Psoas muscle (tissue), 8 donors: ENCODE measurements at regions of chr3 and their contacts with region 1.

Region 1: DNA sequence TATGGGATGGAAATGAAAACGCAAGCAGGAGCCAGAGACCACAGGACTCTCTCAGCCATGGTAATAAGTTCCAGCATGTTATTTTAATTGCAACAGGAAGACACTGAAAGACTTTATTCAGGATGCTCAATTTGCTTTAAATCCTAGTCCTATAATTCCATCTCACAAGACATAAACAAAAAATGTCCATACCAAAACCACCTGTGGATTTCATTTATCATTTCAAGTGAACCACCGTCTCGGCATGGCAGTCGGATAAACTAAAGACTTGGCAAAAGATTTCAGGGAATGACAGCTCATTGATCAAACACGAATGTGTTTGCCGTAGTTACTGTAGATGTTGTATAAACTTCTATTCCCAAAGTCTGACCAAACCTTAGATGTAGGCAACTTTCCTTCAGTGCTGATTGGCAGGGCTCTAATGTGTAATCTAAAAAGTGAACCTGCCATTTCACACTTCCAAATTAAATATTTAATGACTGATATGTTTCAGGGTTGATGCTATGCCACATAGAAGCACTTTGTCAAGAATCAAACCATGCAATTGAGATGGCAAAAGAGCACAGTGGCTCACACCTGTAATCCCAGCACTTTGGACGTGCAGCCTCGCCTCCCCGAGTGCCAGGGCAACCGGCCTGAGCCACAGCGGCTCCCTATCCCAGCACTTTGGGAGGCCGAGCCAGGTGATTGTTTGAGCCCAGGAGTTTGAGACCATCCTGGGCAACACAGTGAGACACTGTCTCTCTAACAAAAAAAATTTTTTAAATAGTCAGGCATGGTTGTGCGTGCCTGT is 331.7 kb downstream of the MAGI1 start:
- DNase-seq: no peak
- ATAC-seq: no peak
- H3K4me3 ChIP-seq: no peak overlapping the region
- H3K27ac ChIP-seq: no peak overlapping the region
- H3K4me1 ChIP-seq: no peaks in the 10 kb centered on the region
- H3K27me3 ChIP-seq: no peaks in the 10 kb centered on the region
- CTCF ChIP-seq: no peak

Region 2: DNA sequence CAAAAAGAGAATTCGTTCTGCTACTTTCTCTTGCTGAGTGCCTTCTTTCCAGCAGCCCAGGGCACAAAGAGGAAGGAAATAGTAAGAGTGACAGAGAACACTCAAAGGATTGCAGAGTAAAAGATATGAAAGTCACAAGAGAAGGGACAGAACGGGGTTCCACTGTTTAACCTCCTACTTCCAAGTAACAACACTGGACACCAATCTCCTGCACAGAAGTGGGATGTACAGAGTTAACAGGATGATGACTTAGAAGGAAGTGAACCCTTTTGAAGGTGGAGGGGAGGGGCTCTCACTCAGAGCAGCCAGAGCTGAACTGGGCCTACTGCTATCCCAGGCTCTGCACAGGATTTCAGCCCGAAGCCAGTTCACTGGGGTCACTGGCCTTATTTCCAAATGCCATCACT is 1351.6 kb before region 1 on chr3:
- intact Hi-C with region 1: loop called in 1 of 2 experiments (anchors 10 kb)
- DNase-seq: no peak
- ATAC-seq: peak in 1 of 4 donors; percentile 26
- H3K4me3 ChIP-seq: no peak overlapping the region
- H3K27ac ChIP-seq: peak overlapping the region; percentile 16
- H3K4me1 ChIP-seq: no peaks in the 10 kb centered on the region
- H3K27me3 ChIP-seq: no peaks in the 10 kb centered on the region
- CTCF ChIP-seq: no peak

Region 3: DNA sequence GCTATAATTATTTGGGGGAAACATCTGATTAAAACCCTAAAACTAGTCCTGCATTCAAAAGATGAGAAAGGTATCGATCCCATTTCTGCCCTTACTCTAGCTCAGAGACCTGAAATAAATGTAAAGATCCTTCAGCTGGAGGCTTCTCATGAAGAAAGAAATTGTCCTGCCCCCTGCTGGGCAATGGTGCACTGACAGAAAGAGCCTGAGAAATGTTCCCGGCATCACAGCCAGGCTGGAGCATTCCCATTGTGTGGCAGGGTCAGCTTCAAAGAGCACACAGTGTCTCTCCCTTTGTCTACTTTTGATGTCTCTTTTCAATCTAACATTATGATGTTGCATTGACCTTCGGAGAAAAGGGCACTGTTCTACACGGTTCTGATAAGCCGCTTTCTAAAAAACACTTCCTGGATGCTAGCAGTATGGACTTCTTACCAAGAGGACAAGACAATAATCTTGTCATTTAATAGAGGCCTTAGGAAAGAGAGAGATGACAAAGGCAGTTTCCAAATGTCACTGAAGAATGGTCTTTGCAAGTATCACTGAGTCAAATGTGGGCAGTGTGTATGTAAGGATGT is 44.2 kb after region 1 on chr3:
- intact Hi-C with region 1: no loop called
- DNase-seq: peak in 1 of 2 donors; percentile 14
- ATAC-seq: peak in 1 of 4 donors; percentile 51
- H3K4me3 ChIP-seq: no peak overlapping the region
- H3K27ac ChIP-seq: no peak overlapping the region
- H3K4me1 ChIP-seq: no peaks in the 10 kb centered on the region
- H3K27me3 ChIP-seq: no peaks in the 10 kb centered on the region
- CTCF ChIP-seq: peak; percentile 48